Stomach (tissue), 19 donors: ENCODE measurements at regions of chr9 and their contacts with region 1.

Region 1: GRCh38 chr9:87479801-87480201 is 17.9 kb upstream of the DAPK1 start:
- DNase-seq: peak in 1 of 2 donors; percentile 45
- H3K4me3 ChIP-seq: no peak overlapping the region
- H3K27ac ChIP-seq: no peak overlapping the region
- H3K4me1 ChIP-seq: no peaks in the 10 kb centered on the region
- H3K27me3 ChIP-seq: no peaks in the 10 kb centered on the region
- CTCF ChIP-seq: no peak
- EP300 ChIP-seq: no peak
- POLR2A ChIP-seq: no peak

Region 2: GRCh38 chr9:86376016-86376415 is 1103.8 kb before region 1 on chr9:
- intact Hi-C with region 1: no loop called
- DNase-seq: no peak
- H3K4me3 ChIP-seq: no peak overlapping the region
- H3K27ac ChIP-seq: no peak overlapping the region
- H3K4me1 ChIP-seq: no peaks in the 10 kb centered on the region
- H3K27me3 ChIP-seq: no peaks in the 10 kb centered on the region
- CTCF ChIP-seq: no peak
- EP300 ChIP-seq: no peak
- POLR2A ChIP-seq: no peak

Region 3: GRCh38 chr9:87238545-87238944 is 241.3 kb before region 1 on chr9:
- intact Hi-C with region 1: no loop called
- DNase-seq: peak in 1 of 2 donors; percentile 44
- H3K4me3 ChIP-seq: no peak overlapping the region
- H3K27ac ChIP-seq: no peak overlapping the region
- H3K4me1 ChIP-seq: no peaks in the 10 kb centered on the region
- H3K27me3 ChIP-seq: peaks cover 0 to 4% (median 0%) of the 10 kb centered on the region in 3 donors
- CTCF ChIP-seq: no peak
- EP300 ChIP-seq: no peak
- POLR2A ChIP-seq: no peak

Region 4: DNA sequence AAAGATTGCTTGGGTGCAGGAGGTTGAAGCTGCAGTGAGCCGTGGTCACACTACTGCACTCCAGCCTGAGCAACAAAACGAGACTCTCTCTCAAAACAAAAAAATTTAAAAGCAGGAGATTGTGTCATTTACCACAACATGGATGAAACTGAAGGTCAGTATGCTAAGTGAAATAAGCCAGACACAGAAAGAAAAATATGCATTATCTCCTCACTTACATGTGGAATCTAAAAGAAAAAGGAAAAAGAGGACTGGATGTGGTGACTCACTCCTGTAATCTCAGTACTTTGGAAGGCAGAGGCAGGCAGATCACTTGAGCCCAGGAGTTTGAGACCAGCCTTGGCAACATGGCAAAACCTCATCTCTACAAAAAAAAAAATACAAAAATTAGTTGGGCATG is 128.9 kb before region 1 on chr9:
- intact Hi-C with region 1: loop called (anchors 5 kb)
- DNase-seq: no peak
- H3K4me3 ChIP-seq: no peak overlapping the region
- H3K27ac ChIP-seq: no peak overlapping the region
- H3K4me1 ChIP-seq: no peaks in the 10 kb centered on the region
- H3K27me3 ChIP-seq: no peaks in the 10 kb centered on the region
- CTCF ChIP-seq: no peak
- EP300 ChIP-seq: no peak
- POLR2A ChIP-seq: no peak

Region 5: GRCh38 chr9:87592554-87593358 is 113.0 kb after region 1 on chr9:
- intact Hi-C with region 1: no loop called
- DNase-seq: peak; percentile 72 to 84
- H3K4me3 ChIP-seq: no peak overlapping the region
- H3K27ac ChIP-seq: peak overlapping the region; percentile 24 to 80 (median 68)
- H3K4me1 ChIP-seq: peaks cover 42 to 62% (median 60%) of the 10 kb centered on the region in 4 donors
- H3K27me3 ChIP-seq: no peaks in the 10 kb centered on the region
- CTCF ChIP-seq: no peak
- EP300 ChIP-seq: no peak
- POLR2A ChIP-seq: no peak